ENCODE measurements at regions of chr18 and their contacts with region 1.

Region 1: DNA sequence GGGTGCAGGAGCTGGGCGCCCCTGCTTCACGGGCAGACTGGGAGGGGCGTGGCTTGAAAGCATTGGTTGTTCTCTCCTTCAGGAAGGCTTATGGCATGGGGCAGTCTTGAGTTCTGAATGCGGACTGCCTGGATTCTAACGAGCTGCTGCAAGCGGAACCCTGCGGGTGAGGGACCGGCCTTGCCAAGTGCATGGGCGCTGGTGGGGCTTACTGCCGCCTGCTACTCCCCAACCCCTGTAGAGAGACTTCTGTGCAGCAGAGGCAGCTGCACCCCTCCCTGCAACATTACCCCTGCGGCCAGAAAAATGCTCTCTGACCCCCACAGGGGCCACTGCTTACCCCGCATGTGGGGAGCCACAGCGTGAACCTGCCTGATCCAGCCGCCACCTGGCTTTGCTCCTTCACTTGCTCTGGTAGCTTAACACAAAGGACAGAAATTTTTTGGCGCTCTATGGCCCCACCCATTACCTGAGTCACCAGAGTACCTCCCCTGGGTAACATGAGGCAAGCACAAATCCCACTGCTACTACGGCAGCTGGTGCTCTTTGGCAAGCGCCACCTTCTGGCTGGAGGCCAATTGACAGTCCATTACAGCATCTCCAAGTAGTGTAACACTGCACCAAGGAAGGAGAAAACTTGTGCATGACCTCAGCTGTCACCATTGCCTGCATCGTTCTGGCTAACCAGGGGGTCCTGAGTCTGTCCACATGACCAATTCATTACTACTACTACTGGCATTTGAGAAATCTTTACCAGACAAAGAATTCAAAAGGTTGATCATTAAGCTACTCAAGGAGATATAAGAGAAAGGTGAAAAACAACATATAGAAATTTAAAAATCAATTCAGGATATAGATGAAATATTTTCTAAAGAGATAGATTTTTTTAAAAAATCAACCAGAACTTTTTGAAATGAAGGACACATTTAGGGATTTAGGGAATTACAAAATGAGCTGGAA is 35.4 kb downstream of the MYL12B start:
- DNase-seq: peak; percentile 90
- ATAC-seq: peak; percentile 99
- H3K4me3 ChIP-seq: peak overlapping the region; percentile 53 to 88 (median 85)
- H3K4me3 Mint-ChIP-seq: peak overlapping the region; percentile 96
- H3K27ac ChIP-seq: no peak overlapping the region
- H3K27ac Mint-ChIP-seq: peak overlapping the region; percentile 80
- H3K4me1 ChIP-seq: peaks cover 7 to 10% of the 10 kb centered on the region in 2 donors
- H3K4me1 Mint-ChIP-seq: peaks cover 13% of the 10 kb centered on the region
- H3K27me3 ChIP-seq: peaks cover 0 to 7% (median 2%) of the 10 kb centered on the region in 4 experiments
- H3K27me3 Mint-ChIP-seq: peaks cover 30% of the 10 kb centered on the region
- CTCF ChIP-seq: peak; percentile 89

Region 2: GRCh38 chr18:3230401-3231334 is 66.6 kb before region 1 on chr18:
- CTCF ChIA-PET with region 1: no interaction called
- POLR2A ChIA-PET with region 1: no interaction called
- intact Hi-C with region 1: no loop called
- DNase-seq: no peak
- ATAC-seq: no peak
- H3K4me3 ChIP-seq: no peak overlapping the region
- H3K4me3 Mint-ChIP-seq: no peak overlapping the region
- H3K27ac ChIP-seq: no peak overlapping the region
- H3K27ac Mint-ChIP-seq: no peak overlapping the region
- H3K4me1 ChIP-seq: no peaks in the 10 kb centered on the region
- H3K4me1 Mint-ChIP-seq: no peaks in the 10 kb centered on the region
- H3K27me3 ChIP-seq: no peaks in the 10 kb centered on the region
- H3K27me3 Mint-ChIP-seq: no peaks in the 10 kb centered on the region
- CTCF ChIP-seq: no peak

Region 3: GRCh38 chr18:3261371-3262246 is 35.7 kb before region 1 on chr18 and contains the start of gene MYL12B:
- CTCF ChIA-PET with region 1: interaction called, 7 read pairs
- POLR2A ChIA-PET with region 1: no interaction called
- intact Hi-C with region 1: loop called (anchors 1 kb)
- DNase-seq: peak; percentile 93
- ATAC-seq: peak; percentile 80
- H3K4me3 ChIP-seq: peak within 1 kb of the TSS; percentile 75 to 96 (median 86)
- H3K4me3 Mint-ChIP-seq: peak within 1 kb of the TSS; percentile 88
- H3K27ac ChIP-seq: peak within 1 kb of the TSS; percentile 86 to 97
- H3K27ac Mint-ChIP-seq: peak within 1 kb of the TSS; percentile 100
- H3K4me1 ChIP-seq: peaks cover 70 to 73% of the 10 kb centered on the region in 2 donors
- H3K4me1 Mint-ChIP-seq: peaks cover 77% of the 10 kb centered on the region
- H3K27me3 ChIP-seq: no peaks in the 10 kb centered on the region
- H3K27me3 Mint-ChIP-seq: no peaks in the 10 kb centered on the region
- CTCF ChIP-seq: no peak
- total RNA-seq, gene MYL12B: 124 and 127 TPM in 2 replicates

Region 4: GRCh38 chr18:3281456-3282400 is 15.6 kb before region 1 on chr18:
- CTCF ChIA-PET with region 1: interaction called, 9 read pairs
- POLR2A ChIA-PET with region 1: interaction called, 3 read pairs
- intact Hi-C with region 1: loop called (anchors 1 kb)
- DNase-seq: peak; percentile 85
- ATAC-seq: peak; percentile 48
- H3K4me3 ChIP-seq: no peak overlapping the region
- H3K4me3 Mint-ChIP-seq: no peak overlapping the region
- H3K27ac ChIP-seq: no peak overlapping the region
- H3K27ac Mint-ChIP-seq: no peak overlapping the region
- H3K4me1 ChIP-seq: peaks cover 22 to 27% of the 10 kb centered on the region in 2 donors
- H3K4me1 Mint-ChIP-seq: peaks cover 29% of the 10 kb centered on the region
- H3K27me3 ChIP-seq: no peaks in the 10 kb centered on the region
- H3K27me3 Mint-ChIP-seq: no peaks in the 10 kb centered on the region
- CTCF ChIP-seq: peak; percentile 89

Region 5: DNA sequence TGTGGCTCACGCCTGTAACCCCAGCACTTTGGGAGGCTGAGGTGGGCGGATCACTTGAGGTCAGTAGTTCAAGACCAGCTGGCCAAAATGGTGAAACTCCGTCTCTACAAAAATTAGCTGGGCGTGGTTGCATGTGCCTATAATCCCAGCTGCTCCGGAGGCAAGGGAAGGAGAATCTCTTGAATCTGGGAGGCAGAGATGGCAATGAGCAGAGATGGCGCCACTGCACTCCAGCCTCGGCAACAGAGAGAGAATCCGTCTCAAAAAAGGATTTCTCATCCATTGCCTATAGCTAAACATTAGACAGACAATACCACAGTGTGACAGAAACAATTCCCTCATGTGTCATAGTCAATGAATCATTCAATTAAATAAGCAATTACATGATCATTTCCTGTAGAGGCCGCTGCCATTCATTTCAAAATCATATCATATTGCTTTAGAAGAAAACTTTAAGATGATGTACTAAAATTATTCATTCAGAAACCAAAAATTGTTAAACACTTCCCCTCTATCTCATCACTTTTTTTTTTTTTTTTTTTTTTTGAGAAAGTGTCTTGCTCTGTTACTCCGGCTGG is 83.2 kb after region 1 on chr18:
- CTCF ChIA-PET with region 1: interaction called, 3 read pairs
- POLR2A ChIA-PET with region 1: no interaction called
- intact Hi-C with region 1: loop called (anchors 10 kb)
- DNase-seq: peak; percentile 37
- ATAC-seq: peak; percentile 31
- H3K4me3 ChIP-seq: no peak overlapping the region
- H3K4me3 Mint-ChIP-seq: no peak overlapping the region
- H3K27ac ChIP-seq: no peak overlapping the region
- H3K27ac Mint-ChIP-seq: no peak overlapping the region
- H3K4me1 ChIP-seq: peaks cover 0 to 13% of the 10 kb centered on the region in 2 donors
- H3K4me1 Mint-ChIP-seq: peaks cover 15% of the 10 kb centered on the region
- H3K27me3 ChIP-seq: no peaks in the 10 kb centered on the region
- H3K27me3 Mint-ChIP-seq: no peaks in the 10 kb centered on the region
- CTCF ChIP-seq: peak; percentile 21

Region 6: GRCh38 chr18:3585656-3586509 is 288.6 kb after region 1 on chr18:
- CTCF ChIA-PET with region 1: interaction called, 25 read pairs
- POLR2A ChIA-PET with region 1: no interaction called
- intact Hi-C with region 1: loop called (anchors 1 kb)
- DNase-seq: peak; percentile 80
- ATAC-seq: peak; percentile 49
- H3K4me3 ChIP-seq: peak overlapping the region in 4 of 5 experiments; percentile 9 to 22 (median 18)
- H3K4me3 Mint-ChIP-seq: peak overlapping the region; percentile 69
- H3K27ac ChIP-seq: peak overlapping the region; percentile 81 to 87
- H3K27ac Mint-ChIP-seq: peak overlapping the region; percentile 83
- H3K4me1 ChIP-seq: peaks cover 42 to 43% of the 10 kb centered on the region in 2 donors
- H3K4me1 Mint-ChIP-seq: peaks cover 47% of the 10 kb centered on the region
- H3K27me3 ChIP-seq: no peaks in the 10 kb centered on the region
- H3K27me3 Mint-ChIP-seq: no peaks in the 10 kb centered on the region
- CTCF ChIP-seq: peak; percentile 57

Region 7: DNA sequence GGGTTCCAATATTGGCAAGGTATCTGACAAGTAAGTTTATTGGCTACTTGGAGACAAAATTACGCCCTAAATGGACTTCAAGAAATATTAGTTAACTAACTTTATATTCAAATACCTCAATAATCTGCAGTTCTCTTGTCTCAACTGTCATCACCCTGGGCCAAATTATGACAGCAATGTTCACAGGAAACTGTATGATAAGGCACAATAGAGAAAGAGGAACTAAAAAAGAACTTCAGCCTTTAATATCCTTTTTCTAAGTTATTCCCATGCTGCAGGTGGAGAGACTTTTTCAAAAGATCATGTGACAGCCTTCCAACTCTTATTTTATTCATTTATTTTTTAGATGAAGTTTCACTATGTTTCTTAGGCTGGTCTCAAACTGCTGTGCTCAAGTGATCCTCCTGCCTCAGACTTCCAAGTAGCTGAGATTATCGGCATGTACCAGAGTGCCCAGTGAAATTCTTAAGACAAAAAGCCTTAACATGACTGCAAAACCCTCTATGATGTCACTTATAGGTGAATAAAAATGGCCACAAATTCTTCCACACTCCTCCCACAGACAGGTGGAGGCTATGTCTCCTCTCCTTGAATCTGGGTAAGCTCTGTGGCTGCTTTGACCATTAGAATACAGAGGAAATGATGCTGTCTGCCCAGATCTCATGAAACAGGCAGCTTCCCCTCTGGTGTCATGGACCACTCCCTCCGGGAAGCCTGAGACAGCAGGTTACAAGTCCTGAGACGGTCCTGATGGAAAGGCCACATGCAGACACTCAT is 363.6 kb after region 1 on chr18:
- CTCF ChIA-PET with region 1: interaction called, 63 read pairs
- POLR2A ChIA-PET with region 1: interaction called, 3 read pairs
- intact Hi-C with region 1: no loop called
- DNase-seq: peak; percentile 40
- ATAC-seq: peak; percentile 54
- H3K4me3 ChIP-seq: peak overlapping the region in 2 of 5 experiments; percentile 12 to 19
- H3K4me3 Mint-ChIP-seq: peak overlapping the region; percentile 29
- H3K27ac ChIP-seq: peak overlapping the region in 1 of 2 donors; percentile 18
- H3K27ac Mint-ChIP-seq: peak overlapping the region; percentile 56
- H3K4me1 ChIP-seq: peaks cover 14 to 17% of the 10 kb centered on the region in 2 donors
- H3K4me1 Mint-ChIP-seq: peaks cover 23% of the 10 kb centered on the region
- H3K27me3 ChIP-seq: no peaks in the 10 kb centered on the region
- H3K27me3 Mint-ChIP-seq: no peaks in the 10 kb centered on the region
- CTCF ChIP-seq: no peak

Region 8: GRCh38 chr18:4433717-4434116 is 1136.4 kb after region 1 on chr18:
- CTCF ChIA-PET with region 1: no interaction called
- POLR2A ChIA-PET with region 1: no interaction called
- intact Hi-C with region 1: no loop called
- DNase-seq: no peak
- ATAC-seq: no peak
- H3K4me3 ChIP-seq: no peak overlapping the region
- H3K4me3 Mint-ChIP-seq: no peak overlapping the region
- H3K27ac ChIP-seq: no peak overlapping the region
- H3K27ac Mint-ChIP-seq: no peak overlapping the region
- H3K4me1 ChIP-seq: no peaks in the 10 kb centered on the region
- H3K4me1 Mint-ChIP-seq: no peaks in the 10 kb centered on the region
- H3K27me3 ChIP-seq: no peaks in the 10 kb centered on the region
- H3K27me3 Mint-ChIP-seq: no peaks in the 10 kb centered on the region
- CTCF ChIP-seq: no peak

Measured in B cell (primary cell).